Stomach (tissue), 19 donors: ENCODE measurements at regions of chr10 and their contacts with region 1.

Region 1: GRCh38 chr10:14478604-14479003 is 147.9 kb upstream of the FRMD4A start:
- DNase-seq: peak; percentile 49 to 80
- H3K4me3 ChIP-seq: no peak overlapping the region
- H3K27ac ChIP-seq: no peak overlapping the region
- H3K4me1 ChIP-seq: peaks cover 0 to 4% (median 0%) of the 10 kb centered on the region in 4 donors
- H3K27me3 ChIP-seq: no peaks in the 10 kb centered on the region
- CTCF ChIP-seq: peak in 2 of 7 experiments; percentile 17 to 32
- EP300 ChIP-seq: no peak
- POLR2A ChIP-seq: no peak

Region 2: GRCh38 chr10:13268841-13269240 is 1209.8 kb before region 1 on chr10:
- intact Hi-C with region 1: no loop called
- DNase-seq: peak in 1 of 2 donors; percentile 31
- H3K4me3 ChIP-seq: no peak overlapping the region
- H3K27ac ChIP-seq: no peak overlapping the region
- H3K4me1 ChIP-seq: peaks cover 0 to 21% (median 14%) of the 10 kb centered on the region in 4 donors
- H3K27me3 ChIP-seq: no peaks in the 10 kb centered on the region
- CTCF ChIP-seq: no peak
- EP300 ChIP-seq: no peak
- POLR2A ChIP-seq: no peak

Region 3: GRCh38 chr10:13787015-13787421 is 691.6 kb before region 1 on chr10:
- intact Hi-C with region 1: loop called (anchors 5 kb)
- DNase-seq: peak in 1 of 2 donors; percentile 82
- H3K4me3 ChIP-seq: no peak overlapping the region
- H3K27ac ChIP-seq: peak overlapping the region in 4 of 5 donors; percentile 34 to 76 (median 56)
- H3K4me1 ChIP-seq: peaks cover 7 to 30% (median 18%) of the 10 kb centered on the region in 4 donors
- H3K27me3 ChIP-seq: no peaks in the 10 kb centered on the region
- CTCF ChIP-seq: no peak
- EP300 ChIP-seq: no peak
- POLR2A ChIP-seq: no peak

Region 4: GRCh38 chr10:14048930-14049613 is 429.5 kb before region 1 on chr10:
- intact Hi-C with region 1: no loop called
- DNase-seq: peak in 1 of 2 donors; percentile 35
- H3K4me3 ChIP-seq: no peak overlapping the region
- H3K27ac ChIP-seq: no peak overlapping the region
- H3K4me1 ChIP-seq: no peaks in the 10 kb centered on the region
- H3K27me3 ChIP-seq: no peaks in the 10 kb centered on the region
- CTCF ChIP-seq: no peak
- EP300 ChIP-seq: no peak
- POLR2A ChIP-seq: no peak

Region 5: DNA sequence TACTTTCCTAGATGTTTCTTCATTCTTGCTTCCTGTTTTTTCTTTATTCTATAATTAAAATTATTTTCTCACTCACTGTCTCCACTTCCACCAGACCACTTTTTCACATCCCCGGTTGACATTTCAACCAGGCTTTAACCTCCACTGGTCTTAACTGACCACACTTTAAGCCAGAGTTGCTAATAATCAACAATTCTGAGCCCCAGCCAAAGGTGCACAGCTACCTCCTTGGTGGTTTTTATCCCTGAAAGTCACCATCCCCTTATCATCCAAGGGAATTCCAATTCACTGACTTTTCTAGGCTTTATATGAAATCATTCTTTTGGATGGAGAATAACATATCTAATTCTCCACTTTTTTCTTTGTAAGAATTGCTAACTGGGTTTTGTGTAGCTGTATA is 286.7 kb before region 1 on chr10:
- intact Hi-C with region 1: loop called (anchors 10 kb)
- DNase-seq: no peak
- H3K4me3 ChIP-seq: no peak overlapping the region
- H3K27ac ChIP-seq: no peak overlapping the region
- H3K4me1 ChIP-seq: no peaks in the 10 kb centered on the region
- H3K27me3 ChIP-seq: peaks cover 0 to 11% (median 5%) of the 10 kb centered on the region in 3 donors
- CTCF ChIP-seq: no peak
- EP300 ChIP-seq: no peak
- POLR2A ChIP-seq: no peak